CD4-positive, alpha-beta memory T cell (primary cell): ENCODE measurements at regions of chr17 and their contacts with region 1.

Region 1: DNA sequence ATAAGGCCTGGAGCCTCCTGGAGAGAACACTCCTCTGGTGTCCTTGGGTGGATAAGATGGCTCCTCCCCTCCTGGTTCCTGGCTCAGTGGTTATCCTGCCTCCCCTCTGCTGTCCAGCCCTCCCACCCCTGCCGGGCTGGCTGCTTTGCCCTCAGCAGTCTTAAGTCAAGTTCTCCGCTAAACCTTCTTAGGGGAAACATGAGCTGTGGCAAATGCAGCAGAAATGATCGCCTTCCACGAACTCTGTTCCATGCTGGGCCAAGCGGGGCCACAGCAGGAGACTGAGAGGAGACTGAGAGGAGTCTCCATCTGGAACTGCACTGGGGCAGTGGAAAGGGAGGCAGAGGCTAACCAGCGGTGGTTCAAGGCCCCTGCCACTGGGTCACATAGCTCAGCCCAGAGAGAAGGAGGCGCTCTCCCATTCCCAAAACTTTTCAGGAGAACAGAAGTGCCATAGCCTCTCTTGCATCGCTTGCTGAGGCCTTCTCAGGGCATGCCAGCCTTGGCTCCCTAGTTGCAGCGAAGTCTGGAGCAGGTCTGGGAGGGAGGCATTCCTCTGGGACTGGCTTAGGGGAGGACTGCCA is 26.9 kb downstream of the TNS4 start:
- DNase-seq: no peak
- H3K4me3 ChIP-seq: no peak overlapping the region
- H3K4me3 Mint-ChIP-seq: no peak overlapping the region
- H3K27ac ChIP-seq: no peak overlapping the region
- H3K27ac Mint-ChIP-seq: peak overlapping the region in 2 of 7 donors; percentile 18 to 68
- H3K4me1 ChIP-seq: peaks cover 32% of the 10 kb centered on the region
- H3K4me1 Mint-ChIP-seq: peaks cover 6 to 26% (median 6%) of the 10 kb centered on the region in 4 donors
- H3K27me3 ChIP-seq: no peaks in the 10 kb centered on the region
- H3K27me3 Mint-ChIP-seq: no peaks in the 10 kb centered on the region

Region 2: DNA sequence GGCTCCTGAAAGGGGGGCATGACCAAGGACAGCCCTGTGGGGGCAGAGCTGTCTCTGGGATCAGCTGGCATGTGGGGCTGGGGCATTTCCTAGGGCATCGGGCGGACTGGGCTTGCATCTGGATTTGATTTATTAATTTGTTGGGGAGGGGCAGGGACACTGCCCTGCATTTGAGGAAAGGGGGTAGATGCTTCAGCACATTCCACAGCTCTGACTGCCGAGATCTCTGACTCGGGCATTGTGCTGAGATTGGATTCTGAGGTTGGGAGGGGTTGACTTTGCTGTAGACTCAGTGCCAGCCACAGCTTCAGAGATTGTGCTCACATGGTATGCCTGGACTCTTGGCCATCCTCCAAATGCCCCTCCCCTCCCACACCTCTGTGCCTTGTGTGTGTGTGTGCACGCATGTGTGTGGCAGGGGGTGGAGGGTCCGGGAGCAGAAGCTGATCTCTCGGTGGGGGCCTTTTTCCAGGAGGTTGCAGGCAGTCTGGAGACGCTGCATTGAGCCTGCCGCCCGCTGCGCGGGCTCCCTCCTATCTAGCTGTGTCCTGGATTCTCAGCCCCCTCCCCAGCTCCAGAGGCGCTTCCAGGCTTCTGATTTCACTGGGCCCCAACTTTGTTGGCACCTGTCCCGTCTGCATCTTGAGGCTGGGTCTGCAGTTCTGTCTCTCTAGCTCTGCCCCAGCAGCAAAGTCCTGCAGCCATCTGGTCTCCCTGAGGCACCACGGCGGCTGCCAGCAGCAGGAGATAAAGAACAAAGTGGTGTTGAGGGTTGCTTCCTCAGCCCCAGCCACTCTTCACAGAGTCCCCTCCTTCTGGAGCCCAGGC is 16.3 kb before region 1 on chr17:
- CTCF ChIA-PET with region 1: interaction called, 22 read pairs
- POLR2A ChIA-PET with region 1: no interaction called
- intact Hi-C with region 1: no loop called
- DNase-seq: no peak
- H3K4me3 ChIP-seq: no peak overlapping the region
- H3K4me3 Mint-ChIP-seq: no peak overlapping the region
- H3K27ac ChIP-seq: no peak overlapping the region
- H3K27ac Mint-ChIP-seq: peak overlapping the region in 1 of 7 donors; percentile 41
- H3K4me1 ChIP-seq: no peaks in the 10 kb centered on the region
- H3K4me1 Mint-ChIP-seq: no peaks in the 10 kb centered on the region
- H3K27me3 ChIP-seq: no peaks in the 10 kb centered on the region
- H3K27me3 Mint-ChIP-seq: no peaks in the 10 kb centered on the region

Region 3: GRCh38 chr17:40490289-40490853 is 15.9 kb after region 1 on chr17:
- CTCF ChIA-PET with region 1: interaction called, 17 read pairs
- POLR2A ChIA-PET with region 1: interaction called, 27 read pairs
- intact Hi-C with region 1: no loop called
- DNase-seq: no peak
- H3K4me3 ChIP-seq: no peak overlapping the region
- H3K4me3 Mint-ChIP-seq: peak overlapping the region in 4 of 8 donors; percentile 20 to 65 (median 60)
- H3K27ac ChIP-seq: no peak overlapping the region
- H3K27ac Mint-ChIP-seq: peak overlapping the region in 5 of 7 donors; percentile 29 to 88 (median 56)
- H3K4me1 ChIP-seq: peaks cover 54% of the 10 kb centered on the region
- H3K4me1 Mint-ChIP-seq: peaks cover 24 to 60% (median 46%) of the 10 kb centered on the region in 4 donors
- H3K27me3 ChIP-seq: no peaks in the 10 kb centered on the region
- H3K27me3 Mint-ChIP-seq: no peaks in the 10 kb centered on the region

Region 4: DNA sequence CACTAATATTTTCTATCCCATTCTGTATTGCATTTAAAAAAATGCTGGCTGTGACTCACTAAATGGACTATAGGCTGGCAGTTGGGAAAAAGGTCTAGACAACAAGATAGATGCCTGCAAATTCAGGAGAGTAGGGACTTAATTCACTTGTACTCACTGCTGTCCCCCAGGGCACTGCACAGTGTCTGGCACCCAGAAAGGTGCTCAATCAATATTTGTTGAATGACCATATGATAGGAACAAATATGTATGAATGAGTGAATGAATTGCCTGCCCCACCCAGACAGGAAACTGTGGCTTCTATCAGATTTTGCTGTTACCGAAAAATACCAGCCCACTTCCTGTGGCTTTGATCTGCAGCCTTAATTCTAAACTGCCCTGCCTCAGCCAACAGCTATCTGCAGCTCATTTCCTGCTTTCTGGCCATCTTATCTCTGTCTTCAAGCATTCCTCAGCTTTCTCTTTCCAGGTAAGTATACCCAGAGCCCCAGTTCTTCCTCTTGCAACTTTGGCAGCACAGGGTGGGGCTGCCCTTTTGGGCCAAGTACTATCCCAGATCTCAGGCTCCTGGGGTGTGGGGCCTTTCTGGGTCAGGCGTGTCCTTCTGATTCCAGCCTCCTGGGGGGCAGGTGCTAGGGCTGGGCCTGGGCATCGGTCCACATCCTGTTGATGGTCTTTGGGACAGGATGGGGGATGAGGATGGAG is 42.2 kb after region 1 on chr17:
- CTCF ChIA-PET with region 1: interaction called, 10 read pairs
- POLR2A ChIA-PET with region 1: interaction called, 53 read pairs
- intact Hi-C with region 1: no loop called
- DNase-seq: peak; percentile 84 to 90 (median 87)
- H3K4me3 ChIP-seq: peak overlapping the region; percentile 51 to 70
- H3K4me3 Mint-ChIP-seq: peak overlapping the region; percentile 76 to 91 (median 84)
- H3K27ac ChIP-seq: peak overlapping the region; percentile 32
- H3K27ac Mint-ChIP-seq: peak overlapping the region; percentile 89 to 99 (median 96)
- H3K4me1 ChIP-seq: peaks cover 77% of the 10 kb centered on the region
- H3K4me1 Mint-ChIP-seq: peaks cover 51 to 76% (median 61%) of the 10 kb centered on the region in 4 donors
- H3K27me3 ChIP-seq: no peaks in the 10 kb centered on the region
- H3K27me3 Mint-ChIP-seq: peaks cover 0 to 2% of the 10 kb centered on the region in 2 donors

Region 5: DNA sequence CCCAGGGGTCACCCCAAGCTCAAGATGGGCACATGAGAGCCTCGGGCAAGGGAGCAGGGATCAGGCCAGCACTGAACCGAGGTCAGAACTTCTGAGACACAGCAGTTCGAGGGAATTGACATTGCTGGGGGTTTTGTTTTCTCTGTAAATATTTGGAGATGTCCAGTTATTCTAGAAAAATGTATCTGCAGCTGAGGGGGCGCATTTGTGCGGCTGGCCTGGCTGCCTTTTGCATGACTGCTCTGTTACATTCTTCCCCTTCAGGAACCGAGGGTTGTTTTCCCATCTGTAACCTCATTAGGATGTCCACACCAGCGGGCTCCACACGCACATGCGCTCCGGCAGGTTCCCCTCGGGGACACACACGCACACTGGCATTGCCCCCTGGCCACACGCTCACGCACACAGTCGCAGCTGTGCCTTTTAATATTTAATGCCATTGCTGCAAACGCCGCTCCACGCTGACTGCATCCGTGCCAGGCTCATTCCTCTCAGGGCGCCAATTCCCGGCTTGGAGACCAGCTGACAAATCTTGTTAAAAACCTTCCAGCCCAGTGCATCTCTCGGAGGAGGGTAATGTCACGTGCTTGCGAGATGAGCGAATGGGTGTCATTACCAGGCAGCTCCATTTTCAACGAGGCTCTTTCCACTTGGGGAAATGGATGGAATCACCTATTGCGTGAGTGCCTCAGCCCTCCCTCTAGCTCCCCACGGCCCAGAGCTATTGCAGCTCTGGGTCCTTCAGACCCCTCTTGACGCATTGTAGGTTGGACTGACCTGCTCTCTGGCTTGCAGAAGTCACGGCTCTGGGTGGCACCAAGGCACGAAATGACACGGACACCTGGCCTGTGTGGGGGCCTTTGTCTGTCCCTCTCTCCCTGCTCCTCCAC is 77.6 kb after region 1 on chr17:
- CTCF ChIA-PET with region 1: interaction called, 6 read pairs
- POLR2A ChIA-PET with region 1: interaction called, 10 read pairs
- intact Hi-C with region 1: no loop called
- DNase-seq: peak in 1 of 5 donors; percentile 25
- H3K4me3 ChIP-seq: no peak overlapping the region
- H3K4me3 Mint-ChIP-seq: peak overlapping the region in 5 of 8 donors; percentile 13 to 69 (median 27)
- H3K27ac ChIP-seq: no peak overlapping the region
- H3K27ac Mint-ChIP-seq: peak overlapping the region; percentile 60 to 96 (median 89)
- H3K4me1 ChIP-seq: peaks cover 99% of the 10 kb centered on the region
- H3K4me1 Mint-ChIP-seq: peaks cover 69 to 100% (median 86%) of the 10 kb centered on the region in 4 donors
- H3K27me3 ChIP-seq: no peaks in the 10 kb centered on the region
- H3K27me3 Mint-ChIP-seq: no peaks in the 10 kb centered on the region